Panc1 (cell line): ENCODE measurements at regions of chr2 and their contacts with region 1.

Region 1: DNA sequence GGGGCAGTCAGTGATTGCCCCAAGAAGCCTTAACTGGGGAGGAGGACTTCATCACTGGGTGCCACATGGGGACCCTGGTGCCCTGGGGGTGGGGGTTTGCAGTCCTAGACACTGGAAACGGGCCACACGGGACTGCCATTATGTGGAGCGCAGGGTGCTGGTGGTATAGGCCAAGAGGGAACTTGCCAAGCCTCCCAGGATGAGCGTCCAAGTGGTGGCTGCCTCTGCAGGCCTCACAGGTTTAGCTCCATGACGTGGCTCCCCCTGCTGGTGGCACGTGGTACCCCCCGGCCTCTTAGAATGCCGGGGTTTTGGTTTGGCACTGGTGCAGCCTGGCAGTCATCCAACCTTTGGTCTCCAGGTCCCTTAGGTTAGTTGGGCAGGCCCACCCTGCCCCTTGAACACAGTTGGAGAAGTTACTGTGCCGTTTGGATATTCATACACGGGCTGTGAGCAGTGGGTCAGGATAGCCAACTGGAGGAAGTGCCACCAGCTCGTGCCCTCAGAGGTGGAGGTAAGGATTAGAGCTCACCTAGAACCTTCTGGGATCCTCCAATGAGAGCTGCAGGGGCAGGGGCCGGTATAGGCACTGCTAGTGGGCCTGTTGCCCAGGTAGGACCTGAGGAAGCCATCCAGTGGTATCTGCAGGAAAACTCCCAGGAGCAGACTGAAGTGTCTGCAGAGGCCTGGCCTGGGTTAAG is 5.6 kb downstream of the PTMA start:
- DNase-seq: no peak
- ATAC-seq: peak; percentile 50
- H3K4me3 ChIP-seq: no peak overlapping the region
- H3K27ac ChIP-seq: peak overlapping the region; percentile 83
- H3K4me1 ChIP-seq: peaks cover 42% of the 10 kb centered on the region
- H3K27me3 ChIP-seq: no peaks in the 10 kb centered on the region
- CTCF ChIP-seq: peak; percentile 94

Region 2: DNA sequence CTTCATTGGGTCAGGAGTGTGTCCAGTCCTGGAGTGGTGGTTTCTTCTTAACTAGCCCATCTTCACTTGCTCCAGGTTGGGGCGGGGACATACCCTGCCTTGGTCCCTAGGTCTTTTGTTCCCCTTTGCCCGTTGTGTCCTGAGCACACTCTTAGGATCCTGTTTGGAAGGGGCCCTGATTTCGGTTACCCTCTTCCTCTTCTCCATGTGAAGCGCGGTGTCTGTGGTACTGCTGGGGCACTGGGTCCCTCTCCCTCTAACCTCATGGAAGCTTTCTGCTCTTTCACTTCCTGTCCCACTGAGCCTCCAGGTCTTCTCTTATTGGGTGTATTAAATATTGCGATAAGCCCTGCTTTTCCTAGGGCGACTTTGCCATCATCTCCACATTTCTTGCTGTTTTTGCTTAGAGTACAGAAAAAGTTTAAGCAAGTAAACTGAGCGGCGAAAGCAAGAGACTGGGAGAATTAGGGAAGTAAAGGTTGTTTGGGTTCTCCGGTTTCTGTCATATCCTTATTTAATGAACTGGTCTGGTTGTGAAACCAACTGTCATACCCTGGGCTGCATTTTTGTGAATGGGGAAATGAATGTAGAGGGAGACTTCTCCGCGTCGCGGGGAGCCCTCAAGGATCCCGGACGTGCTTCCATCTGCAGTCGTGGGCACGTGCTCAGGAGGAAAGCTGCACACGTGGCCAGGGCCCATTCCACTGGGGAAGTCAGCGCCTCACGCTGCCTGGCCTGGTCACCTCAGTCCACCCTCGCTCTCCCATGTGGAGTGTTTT is 392.1 kb before region 1 on chr2:
- CTCF ChIA-PET with region 1: no interaction called
- POLR2A ChIA-PET with region 1: no interaction called
- in situ Hi-C with region 1: no loop called
- intact Hi-C with region 1: no loop called
- DNase-seq: no peak
- ATAC-seq: no peak
- H3K4me3 ChIP-seq: no peak overlapping the region
- H3K27ac ChIP-seq: no peak overlapping the region
- H3K4me1 ChIP-seq: no peaks in the 10 kb centered on the region
- H3K27me3 ChIP-seq: no peaks in the 10 kb centered on the region
- CTCF ChIP-seq: no peak

Region 3: DNA sequence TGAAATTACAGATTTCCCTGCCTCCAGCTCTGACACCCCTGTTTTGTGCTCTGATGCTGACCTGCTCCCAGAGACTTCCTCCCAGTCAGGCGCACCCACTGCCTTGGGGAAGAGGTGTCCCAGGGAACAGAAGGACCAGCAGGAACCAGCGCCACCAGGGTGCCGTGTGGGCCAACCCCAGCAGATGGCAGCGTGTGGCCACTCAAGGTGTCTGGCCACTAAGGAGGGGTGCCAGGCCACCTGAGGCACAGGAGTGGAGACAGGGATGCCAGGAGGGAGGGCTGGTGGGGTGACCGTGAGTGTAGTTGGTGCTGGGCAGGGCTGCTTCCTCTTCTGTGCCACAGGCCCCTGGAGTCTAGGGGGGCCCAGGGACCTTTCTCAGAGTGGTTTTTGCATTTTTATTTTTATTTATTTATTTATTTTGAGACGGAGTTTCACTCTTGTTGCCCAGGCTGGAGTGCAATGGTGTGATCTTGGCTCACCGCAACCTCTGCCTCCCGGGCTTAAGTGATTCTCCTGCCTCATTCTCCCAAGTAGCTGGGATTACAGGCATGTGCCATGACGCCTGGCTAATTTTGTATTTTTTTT is 65.2 kb before region 1 on chr2:
- CTCF ChIA-PET with region 1: interaction called, 6 read pairs
- POLR2A ChIA-PET with region 1: no interaction called
- in situ Hi-C with region 1: no loop called
- intact Hi-C with region 1: loop called (anchors 2 kb)
- DNase-seq: peak; percentile 55
- ATAC-seq: peak; percentile 99
- H3K4me3 ChIP-seq: no peak overlapping the region
- H3K27ac ChIP-seq: peak overlapping the region; percentile 29; the same call in 1 of the 2 replicates
- H3K4me1 ChIP-seq: peaks cover 21% of the 10 kb centered on the region
- H3K27me3 ChIP-seq: no peaks in the 10 kb centered on the region
- CTCF ChIP-seq: peak; percentile 90